Activated CD4-positive, alpha-beta T cell treated with anti-CD3 and anti-CD28 coated beads for 36 hours (primary cell): ENCODE measurements at regions of chr12 and their contacts with region 1.

Region 1: GRCh38 chr12:56468216-56469006 is at the start of gene SPRYD4:
- DNase-seq: peak; percentile 96
- ATAC-seq: peak; percentile 90
- H3K4me3 Mint-ChIP-seq: peak within 1 kb of the TSS; percentile 91
- H3K27ac Mint-ChIP-seq: peak within 1 kb of the TSS; percentile 99
- H3K4me1 Mint-ChIP-seq: peaks cover 40% of the 10 kb centered on the region
- H3K27me3 Mint-ChIP-seq: no peaks in the 10 kb centered on the region
- total RNA-seq, gene SPRYD4: 3.1 TPM

Region 2: GRCh38 chr12:56097738-56098137 is 370.7 kb before region 1 on chr12:
- CTCF ChIA-PET with region 1: no interaction called
- POLR2A ChIA-PET with region 1: no interaction called
- intact Hi-C with region 1: no loop called
- DNase-seq: no peak
- ATAC-seq: no peak
- H3K4me3 Mint-ChIP-seq: no peak overlapping the region
- H3K27ac Mint-ChIP-seq: no peak overlapping the region
- H3K4me1 Mint-ChIP-seq: peaks cover 17% of the 10 kb centered on the region
- H3K27me3 Mint-ChIP-seq: no peaks in the 10 kb centered on the region

Region 3: GRCh38 chr12:56127888-56128669 is 340.3 kb before region 1 on chr12 and contains the start of gene ESYT1:
- CTCF ChIA-PET with region 1: no interaction called
- POLR2A ChIA-PET with region 1: no interaction called
- intact Hi-C with region 1: loop called in 1 of 2 experiments (anchors 5 kb)
- DNase-seq: peak; percentile 98
- ATAC-seq: peak; percentile 96
- H3K4me3 Mint-ChIP-seq: peak within 1 kb of the TSS; percentile 93
- H3K27ac Mint-ChIP-seq: peak within 1 kb of the TSS; percentile 95
- H3K4me1 Mint-ChIP-seq: peaks cover 55% of the 10 kb centered on the region
- H3K27me3 Mint-ChIP-seq: no peaks in the 10 kb centered on the region
- total RNA-seq, gene ESYT1: 132 to 160 TPM

Region 4: DNA sequence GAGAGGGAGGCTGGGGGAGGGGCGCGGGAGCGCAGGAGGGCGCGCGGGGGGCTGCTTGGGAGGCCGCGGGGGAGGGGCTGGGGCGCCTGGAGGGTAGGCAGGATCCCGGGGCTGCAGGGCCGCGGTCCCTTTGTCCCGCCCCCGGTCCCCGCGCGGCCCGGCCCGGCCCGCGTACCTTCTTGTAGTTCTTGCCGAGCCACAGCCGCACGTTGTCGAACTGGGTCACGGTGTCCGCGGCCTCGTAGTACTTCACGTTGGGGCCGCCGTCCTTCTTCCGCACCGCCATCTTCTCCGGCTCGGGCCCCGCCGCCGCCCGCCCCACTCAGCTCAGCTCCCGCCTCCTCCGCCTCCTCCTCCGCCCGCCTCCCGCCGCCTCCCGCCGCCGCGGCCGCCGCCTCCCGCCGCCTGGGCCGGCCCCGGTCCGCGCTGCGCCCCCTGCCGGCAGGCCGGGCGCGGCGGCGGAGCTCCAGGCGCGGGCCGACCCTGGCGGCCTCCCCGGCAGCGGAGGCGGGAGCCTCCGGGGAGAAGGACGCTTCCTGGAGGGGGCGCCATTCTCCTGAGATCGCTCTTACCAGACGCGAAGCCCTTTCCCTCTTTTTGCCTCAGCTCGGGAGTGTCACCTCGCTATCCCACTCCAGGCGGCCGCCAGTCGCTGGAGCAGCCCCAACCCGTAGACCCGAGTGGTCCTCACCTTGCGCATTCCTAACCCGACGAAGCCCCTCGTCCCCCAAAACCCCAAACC is 279.1 kb before region 1 on chr12 and contains the start of gene SMARCC2:
- CTCF ChIA-PET with region 1: interaction called, 7 read pairs
- POLR2A ChIA-PET with region 1: no interaction called
- intact Hi-C with region 1: loop called (anchors 1 kb)
- DNase-seq: peak; percentile 94
- ATAC-seq: peak; percentile 82
- H3K4me3 Mint-ChIP-seq: peak within 1 kb of the TSS; percentile 82
- H3K27ac Mint-ChIP-seq: peak within 1 kb of the TSS; percentile 96
- H3K4me1 Mint-ChIP-seq: peaks cover 38% of the 10 kb centered on the region
- H3K27me3 Mint-ChIP-seq: no peaks in the 10 kb centered on the region
- total RNA-seq, gene SMARCC2: 96.9 to 123 TPM

Region 5: DNA sequence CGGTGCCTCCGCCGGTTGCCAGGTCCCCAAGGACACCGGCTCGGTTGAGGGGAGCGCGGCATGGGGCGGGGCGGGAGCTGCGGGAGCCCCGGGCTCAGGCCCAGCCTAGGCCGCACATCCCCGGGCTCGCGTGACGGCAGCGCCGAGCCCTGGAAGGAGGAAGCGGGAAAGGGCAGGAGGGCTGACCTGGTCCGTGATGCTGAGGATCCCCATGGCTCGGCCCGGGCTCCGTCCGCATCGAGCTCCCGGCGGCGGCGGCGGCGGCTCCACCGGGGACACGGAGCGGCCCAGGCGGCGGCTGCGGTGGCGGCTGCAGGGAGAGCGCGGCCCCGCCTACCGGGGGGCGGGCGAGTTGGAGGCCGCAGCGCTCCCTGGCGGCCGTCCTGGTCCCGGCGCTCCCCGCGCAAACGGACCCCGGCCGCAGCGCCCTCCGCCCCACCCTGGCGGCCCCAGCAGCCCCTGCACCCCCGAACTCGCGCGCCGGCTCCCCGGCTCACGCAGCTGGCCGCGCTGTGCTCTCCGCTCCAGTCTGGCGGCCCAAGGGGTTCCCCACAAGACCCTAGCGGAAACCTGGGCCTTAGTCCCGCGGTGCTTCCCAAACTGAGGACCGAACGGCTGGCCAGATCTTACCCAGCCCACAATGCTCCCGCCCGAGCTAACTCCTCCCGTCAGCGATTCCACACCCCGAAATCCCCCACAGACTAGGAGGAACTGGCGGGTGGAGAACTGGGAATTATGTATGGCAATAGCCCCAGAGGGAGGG is 210.2 kb before region 1 on chr12 and contains the start of gene ANKRD52:
- CTCF ChIA-PET with region 1: interaction called, 8 read pairs
- POLR2A ChIA-PET with region 1: no interaction called
- intact Hi-C with region 1: loop called (anchors 2 to 10 kb)
- DNase-seq: peak; percentile 90
- ATAC-seq: peak; percentile 92
- H3K4me3 Mint-ChIP-seq: peak within 1 kb of the TSS; percentile 83
- H3K27ac Mint-ChIP-seq: peak within 1 kb of the TSS; percentile 72
- H3K4me1 Mint-ChIP-seq: peaks cover 16% of the 10 kb centered on the region
- H3K27me3 Mint-ChIP-seq: no peaks in the 10 kb centered on the region
- total RNA-seq, gene ANKRD52: 29.2 to 31.0 TPM

Region 6: DNA sequence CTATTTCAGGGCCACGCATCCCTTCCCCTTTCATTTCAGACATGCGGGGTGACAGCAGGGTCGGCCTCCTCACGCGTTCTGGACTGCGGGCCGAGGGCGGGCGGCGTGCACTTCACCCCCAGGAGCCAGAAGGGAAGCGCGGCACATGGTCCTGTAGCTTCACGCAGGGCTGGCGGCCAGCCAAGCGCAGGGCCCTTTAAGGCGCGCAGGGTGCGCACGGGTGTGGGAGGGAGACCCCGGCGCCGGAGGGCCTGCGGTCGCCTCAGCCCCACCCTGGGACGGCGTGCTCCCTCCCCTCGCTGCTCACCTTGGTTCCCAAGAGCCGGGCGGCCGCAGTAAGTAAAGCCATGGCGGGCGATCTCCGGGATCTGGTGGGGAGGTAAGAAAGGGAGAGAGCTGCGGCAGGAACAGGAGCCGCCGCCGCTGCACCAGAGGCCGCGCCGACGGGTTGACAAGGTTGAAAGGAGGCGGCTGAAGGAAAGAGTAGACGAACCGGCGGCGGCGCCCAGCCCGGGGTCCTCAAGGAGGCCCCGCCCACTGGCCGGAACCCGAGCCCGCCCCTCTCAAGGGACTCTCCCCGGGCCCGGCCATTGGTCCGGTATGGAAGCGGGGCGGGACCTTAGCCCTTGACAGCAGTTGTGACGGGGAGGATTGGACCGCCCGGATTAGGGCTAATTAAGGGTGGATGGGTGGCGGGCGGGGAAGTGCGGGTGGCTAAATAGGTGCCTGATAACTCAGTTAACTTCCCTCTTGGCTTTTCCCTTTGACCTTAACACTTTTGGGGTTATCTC is 168.4 kb before region 1 on chr12 and contains the start of gene CS:
- CTCF ChIA-PET with region 1: interaction called, 4 read pairs
- POLR2A ChIA-PET with region 1: no interaction called
- intact Hi-C with region 1: loop called (anchors 1 kb)
- DNase-seq: peak; percentile 99
- ATAC-seq: peak; percentile 98
- H3K4me3 Mint-ChIP-seq: peak within 1 kb of the TSS; percentile 96
- H3K27ac Mint-ChIP-seq: peak within 1 kb of the TSS; percentile 91
- H3K4me1 Mint-ChIP-seq: peaks cover 49% of the 10 kb centered on the region
- H3K27me3 Mint-ChIP-seq: no peaks in the 10 kb centered on the region
- total RNA-seq, gene CS: 197 to 293 TPM

Region 7: DNA sequence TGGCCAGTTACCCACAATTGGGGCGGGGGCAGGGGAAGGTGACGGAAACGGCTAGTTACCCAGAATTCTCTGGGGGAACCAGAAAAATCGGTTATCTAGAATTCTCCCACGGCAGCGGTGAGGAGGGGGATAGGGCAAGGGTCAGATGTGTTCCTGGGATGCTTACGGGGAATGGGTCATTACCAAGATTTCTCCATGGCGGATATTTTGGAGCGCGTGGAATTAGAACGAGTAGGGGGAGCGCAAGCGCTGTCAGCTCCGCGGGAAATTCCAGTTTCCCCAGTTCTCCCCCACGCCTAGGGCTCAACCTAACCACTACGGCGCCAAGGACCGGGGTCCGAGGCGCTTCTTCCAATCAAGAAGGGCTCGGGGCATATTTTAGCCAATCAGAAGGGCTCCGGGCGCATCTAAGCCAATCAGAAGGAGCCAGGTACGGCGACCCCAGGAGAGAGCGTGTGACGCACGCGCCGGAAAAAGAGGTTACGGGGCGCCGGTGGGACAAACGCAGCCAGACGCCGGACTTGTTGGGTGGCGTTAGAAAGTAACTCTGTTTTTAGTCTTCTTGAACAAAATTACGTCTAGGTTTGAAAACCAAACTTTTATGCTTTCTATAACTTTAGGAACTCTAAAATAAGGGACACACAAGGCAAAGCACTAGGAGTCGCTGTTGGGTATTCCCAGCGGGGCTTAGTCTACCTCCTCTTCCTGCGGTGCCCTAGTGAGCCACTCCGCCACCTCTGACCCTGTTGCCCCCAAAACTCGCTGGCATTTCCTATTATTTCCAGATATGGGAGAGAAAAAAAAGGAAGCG is 134.5 kb before region 1 on chr12 and contains the start of gene PAN2:
- CTCF ChIA-PET with region 1: interaction called, 4 read pairs
- POLR2A ChIA-PET with region 1: no interaction called
- intact Hi-C with region 1: loop called in 1 of 2 experiments (anchors 1 kb)
- DNase-seq: peak; percentile 96
- ATAC-seq: peak; percentile 88
- H3K4me3 Mint-ChIP-seq: peak within 1 kb of the TSS; percentile 83
- H3K27ac Mint-ChIP-seq: peak within 1 kb of the TSS; percentile 99
- H3K4me1 Mint-ChIP-seq: peaks cover 37% of the 10 kb centered on the region
- H3K27me3 Mint-ChIP-seq: no peaks in the 10 kb centered on the region
- total RNA-seq, gene PAN2: 54.6 to 62.5 TPM

Region 8: DNA sequence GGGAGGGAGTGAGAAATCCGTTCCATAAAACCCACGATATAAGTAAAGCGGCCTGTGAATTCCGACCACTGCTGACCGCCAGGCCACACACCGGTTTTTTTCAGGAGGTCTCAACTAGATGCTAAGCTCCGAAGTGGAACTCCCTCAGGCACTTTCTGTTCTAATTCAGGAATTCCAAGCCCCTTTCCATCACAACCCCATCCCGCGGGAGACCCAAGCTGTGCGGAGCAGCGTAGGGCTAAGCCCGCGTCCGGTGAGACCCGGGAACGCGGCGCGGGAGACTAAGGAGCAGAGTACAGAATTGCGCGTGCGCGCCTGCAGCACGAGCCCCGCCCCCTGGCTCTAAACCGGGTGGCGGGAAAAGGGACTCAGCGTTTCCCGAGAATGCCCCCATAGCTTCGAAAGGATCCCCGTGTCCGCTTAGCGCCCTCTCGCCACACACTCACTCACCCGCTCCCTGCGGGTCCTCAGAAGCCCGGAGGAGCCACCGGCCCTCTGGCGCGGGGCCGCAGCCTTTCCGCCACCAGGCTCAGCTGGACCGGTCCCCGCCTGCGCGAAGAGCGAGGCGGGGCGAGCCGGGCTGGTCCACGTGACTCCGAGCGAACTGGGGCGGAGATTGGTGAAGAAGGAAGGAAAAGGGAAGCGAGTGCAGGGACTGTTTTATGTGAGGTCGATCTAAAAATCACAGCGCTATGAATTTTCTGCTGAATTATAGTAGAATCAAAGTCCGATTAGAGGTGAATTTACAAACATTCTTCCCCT is 19.4 kb before region 1 on chr12 and contains the start of gene TIMELESS:
- CTCF ChIA-PET with region 1: interaction called, 32 read pairs
- POLR2A ChIA-PET with region 1: interaction called, 4 read pairs
- intact Hi-C with region 1: loop called (anchors 1 kb)
- DNase-seq: peak; percentile 92
- ATAC-seq: peak; percentile 97
- H3K4me3 Mint-ChIP-seq: peak within 1 kb of the TSS; percentile 81
- H3K27ac Mint-ChIP-seq: peak within 1 kb of the TSS; percentile 97
- H3K4me1 Mint-ChIP-seq: peaks cover 19% of the 10 kb centered on the region
- H3K27me3 Mint-ChIP-seq: no peaks in the 10 kb centered on the region
- total RNA-seq, gene TIMELESS: 46.3 to 47.3 TPM

Region 9: DNA sequence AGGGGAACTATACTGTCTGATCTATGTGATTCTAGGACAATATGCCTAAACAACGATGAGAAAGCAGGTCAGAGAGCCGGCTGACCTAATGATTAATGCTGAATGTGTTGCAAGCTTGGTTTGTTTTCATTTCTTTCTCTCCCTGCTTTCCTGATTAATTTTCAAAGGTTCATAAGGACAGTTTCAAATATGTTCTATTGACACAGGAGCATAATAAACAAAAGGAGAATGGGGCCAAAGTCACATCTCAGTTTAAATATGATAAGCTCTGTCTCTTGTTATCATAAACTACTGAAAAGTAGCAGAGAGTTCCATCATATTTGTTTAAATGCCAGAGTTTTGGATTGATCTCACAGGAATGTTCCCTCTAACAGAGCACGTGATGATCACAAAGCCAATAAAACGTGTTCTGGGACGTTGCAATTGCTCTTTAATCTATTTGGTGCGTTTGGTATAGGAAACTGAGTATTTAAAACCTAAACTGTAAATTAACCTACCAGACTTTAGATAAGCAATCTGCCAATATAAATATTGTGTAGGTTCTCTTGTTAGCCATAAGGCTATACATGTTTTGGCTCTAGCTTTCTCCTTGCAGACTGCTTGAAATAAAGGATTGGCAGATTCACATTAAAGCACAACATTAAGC is 291.0 kb after region 1 on chr12:
- CTCF ChIA-PET with region 1: no interaction called
- POLR2A ChIA-PET with region 1: no interaction called
- intact Hi-C with region 1: no loop called
- DNase-seq: no peak
- ATAC-seq: no peak
- H3K4me3 Mint-ChIP-seq: no peak overlapping the region
- H3K27ac Mint-ChIP-seq: no peak overlapping the region
- H3K4me1 Mint-ChIP-seq: peaks cover 10% of the 10 kb centered on the region
- H3K27me3 Mint-ChIP-seq: no peaks in the 10 kb centered on the region